ENCODE measurements at regions of chr1 and their contacts with region 1.

Region 1: DNA sequence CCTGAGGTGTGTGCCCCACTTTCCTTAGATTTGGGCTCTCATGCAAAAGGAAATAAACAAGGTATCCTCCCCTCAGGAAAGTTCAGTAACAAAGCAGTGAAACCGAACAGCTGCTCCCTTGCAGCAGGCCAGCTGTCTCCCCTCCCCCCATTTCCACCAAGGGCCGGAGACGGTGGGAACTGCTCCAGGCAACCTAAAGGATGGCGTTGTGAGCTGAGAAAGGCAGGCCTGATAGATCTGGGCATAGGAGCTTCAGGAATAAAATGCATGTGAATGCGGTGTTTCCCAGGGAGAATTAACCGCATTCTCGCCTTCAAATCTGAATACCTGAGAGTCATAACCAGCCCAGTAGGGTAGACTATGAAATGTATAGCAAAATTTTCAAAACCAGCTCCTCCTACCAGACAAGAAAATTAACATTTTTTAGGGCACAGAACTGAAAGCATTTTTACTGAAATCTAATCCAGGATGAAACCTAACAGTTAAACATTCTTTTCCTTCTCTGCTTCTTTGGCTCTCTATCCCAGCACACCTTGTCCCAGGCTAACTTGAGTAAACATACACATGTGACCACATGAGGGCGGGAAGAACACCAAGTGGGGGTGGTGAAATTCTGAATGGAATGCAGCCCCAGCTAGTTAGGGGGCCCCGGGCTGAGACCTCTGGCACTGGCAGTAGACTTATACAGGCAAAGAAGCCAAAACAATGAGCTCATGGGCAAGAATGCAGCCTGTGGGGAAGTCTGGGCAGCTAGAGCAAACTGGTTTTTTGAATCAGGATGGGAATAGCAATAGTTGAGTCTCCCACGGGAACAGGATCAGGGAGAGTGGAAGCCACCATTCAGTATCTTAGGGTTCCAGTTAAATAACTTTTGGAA is 11.5 kb downstream of the MCL1 start:
- DNase-seq: peak; percentile 93
- ATAC-seq: peak; percentile 60
- H3K4me3 ChIP-seq: no peak overlapping the region
- H3K27ac ChIP-seq: peak overlapping the region; percentile 78
- H3K4me1 ChIP-seq: peaks cover 48% of the 10 kb centered on the region
- H3K27me3 ChIP-seq: no peaks in the 10 kb centered on the region
- CTCF ChIP-seq: peak; percentile 22; the same call in 1 of the 2 replicates

Region 2: DNA sequence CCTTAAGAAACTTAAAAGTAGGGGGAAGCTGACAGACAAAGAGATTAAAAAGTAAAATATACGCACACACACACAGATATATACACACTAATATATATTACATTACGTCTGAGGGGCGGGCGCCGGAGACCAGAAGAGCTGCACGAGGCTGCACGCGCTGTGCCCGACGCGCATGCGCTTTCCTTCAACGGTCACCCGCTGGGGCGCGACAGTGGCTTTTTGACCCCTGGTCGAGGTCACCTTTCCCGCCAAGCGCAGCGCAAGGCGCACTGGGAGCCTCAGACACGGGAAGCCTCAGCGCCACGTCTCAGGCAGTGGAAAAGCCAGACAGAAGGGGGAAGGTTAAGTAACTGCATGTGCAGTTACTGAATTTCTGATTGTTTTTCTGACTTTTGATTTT is 152.7 kb after region 1 on chr1 and contains the start of gene HORMAD1:
- CTCF ChIA-PET with region 1: no interaction called
- POLR2A ChIA-PET with region 1: interaction called, 15 read pairs
- intact Hi-C with region 1: no loop called
- DNase-seq: no peak
- ATAC-seq: no peak
- H3K4me3 ChIP-seq: no peak within 1 kb of the TSS
- H3K27ac ChIP-seq: no peak within 1 kb of the TSS
- H3K4me1 ChIP-seq: no peaks in the 10 kb centered on the region
- H3K27me3 ChIP-seq: no peaks in the 10 kb centered on the region
- CTCF ChIP-seq: no peak
- total RNA-seq, gene HORMAD1: not detected in 2 replicates

Measured in PC-3 (cell line).